ENCODE measurements at regions of chr13 and their contacts with region 1.

Region 1: GRCh38 chr13:42354241-42355091 is 82.5 kb downstream of the AKAP11 start:
- DNase-seq: peak in 7 of 9 experiments; percentile 18 to 63 (median 48)
- ATAC-seq: peak; percentile 43
- H3K4me3 ChIP-seq: peak overlapping the region in 1 of 2 experiments; percentile 12
- H3K4me3 Mint-ChIP-seq: peak overlapping the region; percentile 56
- H3K27ac ChIP-seq: peak overlapping the region; percentile 13 to 67
- H3K27ac Mint-ChIP-seq: peak overlapping the region; percentile 88
- H3K4me1 ChIP-seq: peaks cover 25% of the 10 kb centered on the region
- H3K4me1 Mint-ChIP-seq: peaks cover 30% of the 10 kb centered on the region
- H3K27me3 ChIP-seq: no peaks in the 10 kb centered on the region
- H3K27me3 Mint-ChIP-seq: no peaks in the 10 kb centered on the region
- CTCF ChIP-seq: peak; percentile 13

Region 2: GRCh38 chr13:42392716-42393572 is 38.5 kb after region 1 on chr13:
- CTCF ChIA-PET with region 1: interaction called, 5 read pairs
- POLR2A ChIA-PET with region 1: interaction called, 3 read pairs
- intact Hi-C with region 1: loop called (anchors 1 to 5 kb)
- DNase-seq: peak in 4 of 9 experiments; percentile 31 to 77 (median 62)
- ATAC-seq: peak; percentile 64
- H3K4me3 ChIP-seq: peak overlapping the region in 1 of 2 experiments; percentile 1
- H3K4me3 Mint-ChIP-seq: peak overlapping the region; percentile 0
- H3K27ac ChIP-seq: peak overlapping the region in 1 of 2 experiments; percentile 72
- H3K27ac Mint-ChIP-seq: peak overlapping the region; percentile 69
- H3K4me1 ChIP-seq: peaks cover 51% of the 10 kb centered on the region
- H3K4me1 Mint-ChIP-seq: peaks cover 74% of the 10 kb centered on the region
- H3K27me3 ChIP-seq: no peaks in the 10 kb centered on the region
- H3K27me3 Mint-ChIP-seq: no peaks in the 10 kb centered on the region
- CTCF ChIP-seq: no peak

Region 3: GRCh38 chr13:42466123-42466522 is 111.7 kb after region 1 on chr13:
- CTCF ChIA-PET with region 1: no interaction called
- POLR2A ChIA-PET with region 1: no interaction called
- intact Hi-C with region 1: loop called in 1 of 2 experiments (anchors 5 kb)
- DNase-seq: peak in 1 of 9 experiments; percentile 9
- ATAC-seq: no peak
- H3K4me3 ChIP-seq: no peak overlapping the region
- H3K4me3 Mint-ChIP-seq: peak overlapping the region; percentile 16
- H3K27ac ChIP-seq: peak overlapping the region in 1 of 2 experiments; percentile 49
- H3K27ac Mint-ChIP-seq: peak overlapping the region; percentile 42
- H3K4me1 ChIP-seq: peaks cover 13% of the 10 kb centered on the region
- H3K4me1 Mint-ChIP-seq: peaks cover 23% of the 10 kb centered on the region
- H3K27me3 ChIP-seq: no peaks in the 10 kb centered on the region
- H3K27me3 Mint-ChIP-seq: no peaks in the 10 kb centered on the region
- CTCF ChIP-seq: no peak

Region 4: DNA sequence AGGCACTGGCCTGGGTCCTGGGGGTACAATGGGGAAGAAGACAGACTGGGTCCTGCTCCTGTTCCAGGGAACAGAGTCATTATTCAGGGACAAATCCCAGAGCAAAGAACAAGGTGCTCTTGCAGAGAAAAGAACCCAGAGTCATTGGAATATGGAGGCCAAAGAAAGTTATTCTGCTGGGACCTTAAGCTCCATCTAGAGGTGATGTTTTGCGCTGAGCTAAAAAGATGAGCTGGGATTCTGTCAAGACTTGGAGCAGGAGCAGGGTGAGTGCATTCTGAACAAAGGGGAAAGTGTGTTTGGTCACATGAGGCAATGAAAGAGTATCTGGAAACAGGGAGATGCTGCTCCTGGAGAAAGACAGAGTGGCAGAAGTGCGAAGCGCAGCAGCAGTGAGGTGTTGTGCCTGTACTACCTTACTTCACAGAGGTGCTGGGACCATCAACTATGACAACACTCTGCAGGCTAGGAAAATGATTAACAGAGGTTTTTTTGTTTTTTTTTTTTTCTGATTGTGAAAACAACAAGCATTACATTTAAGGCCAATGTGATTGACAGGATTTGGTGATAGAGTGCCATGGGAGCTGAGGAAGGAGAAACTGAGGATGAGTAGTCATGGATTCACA is 124.2 kb after region 1 on chr13:
- CTCF ChIA-PET with region 1: interaction called, 6 read pairs
- POLR2A ChIA-PET with region 1: interaction called, 3 read pairs
- intact Hi-C with region 1: loop called (anchors 1 to 5 kb)
- DNase-seq: peak in 2 of 9 experiments; percentile 18 to 39
- ATAC-seq: no peak
- H3K4me3 ChIP-seq: no peak overlapping the region
- H3K4me3 Mint-ChIP-seq: no peak overlapping the region
- H3K27ac ChIP-seq: no peak overlapping the region
- H3K27ac Mint-ChIP-seq: no peak overlapping the region
- H3K4me1 ChIP-seq: no peaks in the 10 kb centered on the region
- H3K4me1 Mint-ChIP-seq: no peaks in the 10 kb centered on the region
- H3K27me3 ChIP-seq: no peaks in the 10 kb centered on the region
- H3K27me3 Mint-ChIP-seq: no peaks in the 10 kb centered on the region
- CTCF ChIP-seq: peak; percentile 15

Region 5: GRCh38 chr13:42574435-42575311 is 220.2 kb after region 1 on chr13:
- CTCF ChIA-PET with region 1: no interaction called
- POLR2A ChIA-PET with region 1: no interaction called
- intact Hi-C with region 1: loop called (anchors 10 kb)
- DNase-seq: peak in 6 of 9 experiments; percentile 12 to 41 (median 28)
- ATAC-seq: peak; percentile 54
- H3K4me3 ChIP-seq: peak overlapping the region; percentile 48 to 53
- H3K4me3 Mint-ChIP-seq: peak overlapping the region; percentile 86
- H3K27ac ChIP-seq: no peak overlapping the region
- H3K27ac Mint-ChIP-seq: no peak overlapping the region
- H3K4me1 ChIP-seq: peaks cover 10% of the 10 kb centered on the region
- H3K4me1 Mint-ChIP-seq: peaks cover 15% of the 10 kb centered on the region
- H3K27me3 ChIP-seq: peaks cover 0 to 4% of the 10 kb centered on the region in 2 experiments
- H3K27me3 Mint-ChIP-seq: peaks cover 28% of the 10 kb centered on the region
- CTCF ChIP-seq: no peak

Measured in CD8-positive, alpha-beta T cell (primary cell).